HepG2 (cell line): ENCODE measurements at regions of chr6 and their contacts with region 1.

Region 1: GRCh38 chr6:28080631-28081485 is 490 bp downstream of the ZNF165 start:
- DNase-seq: peak; percentile 95
- ATAC-seq: peak; percentile 95
- H3K4me3 ChIP-seq: peak overlapping the region; percentile 77 to 89 (median 87)
- H3K27ac ChIP-seq: peak overlapping the region; percentile 78
- H3K4me1 ChIP-seq: peaks cover 34% of the 10 kb centered on the region
- H3K27me3 ChIP-seq: no peaks in the 10 kb centered on the region; a peak in 1 of 5 replicates
- CTCF ChIP-seq: peak; percentile 28
- EP300 ChIP-seq: peak in 1 of 2 experiments; percentile 61; a peak in 1 of 4 replicates
- POLR2A ChIP-seq: peak; percentile 55 to 56; a peak in 3 of 4 replicates
- RAD21 ChIP-seq: peak; percentile 57; the same call in 1 of the 2 replicates

Region 2: DNA sequence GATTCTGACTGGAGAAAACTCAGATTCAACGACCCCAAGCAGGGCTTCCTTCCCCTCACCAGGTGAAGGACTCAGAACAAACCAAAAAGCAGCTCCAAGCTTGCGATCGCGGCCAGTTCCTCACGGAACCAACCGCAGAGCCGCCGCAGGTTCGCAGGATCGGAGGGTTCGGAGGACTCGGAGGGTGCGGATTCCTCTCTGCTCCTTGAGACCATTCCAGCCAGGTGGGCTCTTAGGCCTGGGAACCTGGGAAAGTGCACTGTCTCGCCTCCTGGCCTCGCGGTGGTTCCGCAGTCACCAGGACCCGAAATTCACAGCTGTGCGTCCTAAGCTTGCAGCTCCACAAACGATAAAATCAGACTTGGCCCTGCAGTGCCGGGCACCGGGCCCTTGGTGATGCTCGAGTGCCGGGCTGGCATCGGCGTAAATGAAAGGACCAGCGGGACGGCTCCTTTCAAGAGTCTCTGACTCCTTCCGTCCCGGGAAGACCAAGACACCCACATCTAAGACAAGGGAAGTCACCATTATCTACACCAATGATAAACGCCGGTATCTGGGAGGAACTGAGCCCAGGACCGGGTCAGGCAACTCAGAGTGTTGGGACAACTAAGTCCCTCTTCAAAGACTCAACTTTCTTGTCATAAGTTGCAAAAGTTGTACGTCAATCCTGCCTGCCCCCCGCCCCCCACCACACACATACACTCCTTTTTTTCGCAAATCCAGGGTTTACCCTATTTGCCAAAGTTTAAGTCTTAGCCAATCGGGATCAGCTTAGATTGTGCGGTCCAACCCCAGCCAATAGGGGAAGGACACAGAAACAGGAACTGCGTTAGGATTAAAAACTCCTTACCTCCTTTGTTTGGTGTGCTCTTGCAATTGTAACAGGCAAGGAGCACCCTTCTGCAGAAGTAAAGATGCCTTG is 903.1 kb before region 1 on chr6:
- CTCF ChIA-PET with region 1: no interaction called
- POLR2A ChIA-PET with region 1: no interaction called
- in situ Hi-C with region 1: no loop called
- intact Hi-C with region 1: loop called (anchors 2 kb)
- DNase-seq: peak; percentile 65
- ATAC-seq: peak; percentile 91
- H3K4me3 ChIP-seq: peak overlapping the region; percentile 86 to 100 (median 97)
- H3K27ac ChIP-seq: peak overlapping the region; percentile 50
- H3K4me1 ChIP-seq: peaks cover 18% of the 10 kb centered on the region
- H3K27me3 ChIP-seq: peaks cover 0 to 12% of the 10 kb centered on the region in 2 experiments; a peak in 2 of 5 replicates
- CTCF ChIP-seq: peak; percentile 58
- EP300 ChIP-seq: no peak
- POLR2A ChIP-seq: no peak
- RAD21 ChIP-seq: peak; percentile 61